ENCODE measurements at regions of chr1 and their contacts with region 1.

Region 1: DNA sequence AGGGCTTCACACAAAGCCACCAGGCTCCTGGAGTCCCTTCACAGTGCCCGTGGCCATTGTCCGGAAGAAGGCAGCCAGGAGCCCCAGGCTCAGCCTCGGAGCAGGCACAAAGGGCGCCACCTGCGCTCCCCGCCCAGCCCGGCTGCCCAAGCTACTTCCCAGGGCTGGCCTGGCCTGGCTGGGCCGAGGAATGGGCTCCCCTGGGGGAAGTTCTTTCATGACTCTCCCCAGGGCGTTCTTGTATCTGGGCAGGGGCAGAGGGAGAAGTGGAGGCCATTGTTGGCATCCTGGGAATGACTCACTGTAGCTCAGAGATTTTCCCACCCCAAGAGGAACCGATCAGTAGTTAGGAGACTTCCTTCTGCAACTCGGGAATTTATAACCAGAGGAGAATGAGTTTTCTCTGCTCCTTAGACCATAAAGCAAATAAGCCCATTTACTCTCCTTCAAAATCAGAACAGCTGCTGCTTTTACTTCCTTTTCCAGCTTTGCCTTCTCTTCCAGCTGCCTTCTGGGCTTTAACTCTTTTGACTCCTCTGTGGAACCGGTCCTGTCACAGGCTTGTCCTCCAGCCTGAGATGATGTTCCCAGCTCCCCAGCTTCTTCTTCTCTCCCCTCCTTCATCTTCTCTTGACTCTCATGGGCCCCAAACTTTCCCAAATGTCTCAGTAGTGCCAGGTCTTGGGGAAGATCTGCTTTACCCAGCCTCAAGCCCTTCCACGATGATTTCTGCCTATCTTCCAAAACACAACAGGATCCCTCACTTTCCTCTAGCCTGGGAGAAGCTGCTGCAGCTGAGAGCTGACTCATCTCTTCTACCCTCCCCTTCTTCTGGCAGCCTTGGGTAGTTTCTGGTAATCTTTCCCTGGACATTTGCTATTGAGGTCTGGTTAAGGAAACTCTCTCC is 118.7 kb upstream of the CD34 start:
- DNase-seq: no peak
- H3K4me3 ChIP-seq: no peak overlapping the region
- CTCF ChIP-seq: no peak

Region 2: GRCh38 chr1:207925210-207925609 is 104.4 kb before region 1 on chr1:
- CTCF ChIA-PET with region 1: no interaction called
- POLR2A ChIA-PET with region 1: no interaction called
- DNase-seq: no peak
- H3K4me3 ChIP-seq: no peak overlapping the region
- CTCF ChIP-seq: no peak

Region 3: GRCh38 chr1:208019257-208019656 is 10.4 kb before region 1 on chr1:
- CTCF ChIA-PET with region 1: interaction called, 35 read pairs
- POLR2A ChIA-PET with region 1: no interaction called
- DNase-seq: no peak
- H3K4me3 ChIP-seq: no peak overlapping the region
- CTCF ChIP-seq: no peak

Region 4: GRCh38 chr1:208042041-208042615 is 12.5 kb after region 1 on chr1:
- CTCF ChIA-PET with region 1: interaction called, 11 read pairs
- POLR2A ChIA-PET with region 1: no interaction called
- DNase-seq: no peak
- H3K4me3 ChIP-seq: no peak overlapping the region
- CTCF ChIP-seq: no peak